ENCODE measurements at regions of chr1 and their contacts with region 1.

Region 1: GRCh38 chr1:154324669-154325582 is at the start of gene ATP8B2:
- DNase-seq: peak in 1 of 2 experiments; percentile 60
- H3K4me3 ChIP-seq: no peak within 1 kb of the TSS
- H3K27ac ChIP-seq: no peak within 1 kb of the TSS
- H3K4me1 ChIP-seq: no peaks in the 10 kb centered on the region
- H3K27me3 ChIP-seq: peaks cover 57% of the 10 kb centered on the region
- CTCF ChIP-seq: peak; percentile 80
- total RNA-seq, gene ATP8B2: 0.07 and 1.4 TPM in 2 replicates

Region 2: GRCh38 chr1:154304664-154305337 is 20.1 kb before region 1 on chr1:
- CTCF ChIA-PET with region 1: interaction called, 19 read pairs
- POLR2A ChIA-PET with region 1: no interaction called
- intact Hi-C with region 1: no loop called
- DNase-seq: no peak
- H3K4me3 ChIP-seq: no peak overlapping the region
- H3K27ac ChIP-seq: no peak overlapping the region
- H3K4me1 ChIP-seq: no peaks in the 10 kb centered on the region
- H3K27me3 ChIP-seq: peaks cover 3% of the 10 kb centered on the region
- CTCF ChIP-seq: no peak

Region 3: DNA sequence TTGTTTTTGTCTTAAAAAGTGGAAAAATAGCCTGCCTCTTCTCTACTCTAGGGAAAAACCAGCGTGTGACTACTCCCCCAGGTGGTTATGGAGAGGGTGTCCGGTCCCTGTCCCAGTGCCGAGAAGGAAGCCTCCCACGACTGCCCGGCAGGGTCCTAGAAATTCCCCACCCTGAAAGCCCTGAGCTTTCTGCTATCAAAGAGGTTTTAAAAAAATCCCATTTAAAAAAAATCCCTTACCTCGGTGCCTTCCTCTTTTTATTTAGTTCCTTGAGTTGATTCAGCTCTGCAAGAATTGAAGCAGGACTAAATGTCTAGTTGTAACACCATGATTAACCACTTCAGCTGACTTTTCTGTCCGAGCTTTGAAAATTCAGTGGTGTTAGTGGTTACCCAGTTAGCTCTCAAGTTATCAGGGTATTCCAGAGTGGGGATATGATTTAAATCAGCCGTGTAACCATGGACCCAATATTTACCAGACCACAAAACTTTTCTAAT is 142.0 kb after region 1 on chr1:
- CTCF ChIA-PET with region 1: interaction called, 23 read pairs
- POLR2A ChIA-PET with region 1: interaction called, 5 read pairs
- intact Hi-C with region 1: no loop called
- DNase-seq: no peak
- H3K4me3 ChIP-seq: no peak overlapping the region
- H3K27ac ChIP-seq: no peak overlapping the region
- H3K4me1 ChIP-seq: peaks cover 14% of the 10 kb centered on the region
- H3K27me3 ChIP-seq: no peaks in the 10 kb centered on the region
- CTCF ChIP-seq: no peak

Measured in PC-9 (cell line).